ENCODE measurements at regions of chr9 and their contacts with region 1.

Region 1: DNA sequence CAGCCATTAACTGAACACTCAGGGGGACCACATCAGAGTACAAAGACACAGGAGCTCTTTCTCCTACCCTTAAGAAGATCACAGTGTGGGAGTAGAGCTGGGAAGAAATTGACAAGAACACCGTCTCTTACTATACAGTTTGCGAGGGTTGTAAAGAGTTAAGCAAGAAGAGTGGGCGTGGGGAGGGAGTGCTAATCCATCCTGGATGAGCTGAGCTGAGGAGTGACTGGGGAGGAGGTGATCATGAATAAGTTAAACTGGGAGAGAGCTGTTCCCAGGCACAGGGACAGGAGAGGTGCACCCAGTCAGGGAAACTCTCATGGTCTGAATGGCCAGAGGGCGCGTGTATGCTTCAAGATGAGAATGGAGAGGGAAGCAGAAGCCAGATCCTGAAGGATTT is 17.2 kb downstream of the TAF1L start:
- DNase-seq: no peak
- ATAC-seq: no peak
- H3K4me3 ChIP-seq: no peak overlapping the region
- H3K27ac ChIP-seq: no peak overlapping the region
- H3K4me1 ChIP-seq: no peaks in the 10 kb centered on the region
- H3K27me3 ChIP-seq: peaks cover 0 to 9% of the 10 kb centered on the region in 2 donors
- CTCF ChIP-seq: no peak

Region 2: DNA sequence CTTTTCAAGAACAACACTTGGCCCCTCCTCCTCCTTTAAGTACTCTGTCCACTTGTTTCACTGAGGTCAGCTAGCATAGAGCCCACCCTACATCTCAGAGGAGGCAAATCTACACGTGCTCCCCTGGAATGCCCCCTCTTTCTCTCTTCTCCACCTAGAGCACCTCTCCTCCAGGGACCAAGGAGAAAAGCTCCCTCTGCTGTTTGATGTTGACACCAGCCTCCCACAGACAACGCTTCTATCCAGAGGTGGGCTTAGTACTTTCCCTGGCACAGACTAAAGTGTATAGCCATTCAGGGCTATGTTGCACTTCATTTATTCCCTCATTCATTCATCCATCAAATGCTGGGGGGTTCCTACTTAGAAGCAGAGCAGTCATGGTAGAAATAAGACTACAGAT is 85.4 kb after region 1 on chr9:
- intact Hi-C with region 1: loop called in 1 of 2 experiments (anchors 10 kb)
- DNase-seq: no peak
- ATAC-seq: no peak
- H3K4me3 ChIP-seq: no peak overlapping the region
- H3K27ac ChIP-seq: no peak overlapping the region
- H3K4me1 ChIP-seq: no peaks in the 10 kb centered on the region
- H3K27me3 ChIP-seq: no peaks in the 10 kb centered on the region
- CTCF ChIP-seq: no peak